IMR-90 (cell line): ENCODE measurements at regions of chr1 and their contacts with region 1.

Region 1: GRCh38 chr1:32798679-32799416 is 18.3 kb downstream of the YARS1 start:
- DNase-seq: no peak
- ATAC-seq: 0 out of 2 replicates have a peak, but pooled peaks have one; percentile 7
- H3K4me3 ChIP-seq: no peak overlapping the region
- H3K27ac ChIP-seq: no peak overlapping the region
- H3K4me1 ChIP-seq: peaks cover 18% of the 10 kb centered on the region; the same call in 1 of the 2 replicates
- H3K27me3 ChIP-seq: no peaks in the 10 kb centered on the region
- CTCF ChIP-seq: no peak
- POLR2A ChIP-seq: no peak
- RAD21 ChIP-seq: no peak

Region 2: GRCh38 chr1:32600034-32600433 is 198.8 kb before region 1 on chr1:
- CTCF ChIA-PET with region 1: no interaction called
- POLR2A ChIA-PET with region 1: no interaction called
- dilution Hi-C with region 1: no loop called
- in situ Hi-C with region 1: no loop called
- intact Hi-C with region 1: no loop called
- DNase-seq: peak; percentile 2
- ATAC-seq: no peak
- H3K4me3 ChIP-seq: no peak overlapping the region
- H3K27ac ChIP-seq: no peak overlapping the region
- H3K4me1 ChIP-seq: no peaks in the 10 kb centered on the region
- H3K27me3 ChIP-seq: no peaks in the 10 kb centered on the region
- CTCF ChIP-seq: no peak
- POLR2A ChIP-seq: no peak
- RAD21 ChIP-seq: no peak

Region 3: GRCh38 chr1:32813941-32814739 is 15.3 kb after region 1 on chr1:
- CTCF ChIA-PET with region 1: no interaction called
- POLR2A ChIA-PET with region 1: no interaction called
- dilution Hi-C with region 1: no loop called
- in situ Hi-C with region 1: no loop called
- intact Hi-C with region 1: loop called (anchors 2 kb)
- DNase-seq: peak; percentile 37
- ATAC-seq: no peak
- H3K4me3 ChIP-seq: no peak overlapping the region
- H3K27ac ChIP-seq: no peak overlapping the region
- H3K4me1 ChIP-seq: peaks cover 11% of the 10 kb centered on the region
- H3K27me3 ChIP-seq: no peaks in the 10 kb centered on the region
- CTCF ChIP-seq: no peak
- POLR2A ChIP-seq: no peak
- RAD21 ChIP-seq: no peak

Region 4: GRCh38 chr1:32831878-32832277 is 33.0 kb after region 1 on chr1:
- CTCF ChIA-PET with region 1: no interaction called
- POLR2A ChIA-PET with region 1: no interaction called
- dilution Hi-C with region 1: no loop called
- in situ Hi-C with region 1: no loop called
- intact Hi-C with region 1: no loop called
- DNase-seq: no peak
- ATAC-seq: no peak
- H3K4me3 ChIP-seq: no peak overlapping the region
- H3K27ac ChIP-seq: no peak overlapping the region
- H3K4me1 ChIP-seq: no peaks in the 10 kb centered on the region
- H3K27me3 ChIP-seq: no peaks in the 10 kb centered on the region
- CTCF ChIP-seq: no peak
- POLR2A ChIP-seq: no peak
- RAD21 ChIP-seq: no peak